ENCODE measurements at regions of chr5 and their contacts with region 1.

Region 1: DNA sequence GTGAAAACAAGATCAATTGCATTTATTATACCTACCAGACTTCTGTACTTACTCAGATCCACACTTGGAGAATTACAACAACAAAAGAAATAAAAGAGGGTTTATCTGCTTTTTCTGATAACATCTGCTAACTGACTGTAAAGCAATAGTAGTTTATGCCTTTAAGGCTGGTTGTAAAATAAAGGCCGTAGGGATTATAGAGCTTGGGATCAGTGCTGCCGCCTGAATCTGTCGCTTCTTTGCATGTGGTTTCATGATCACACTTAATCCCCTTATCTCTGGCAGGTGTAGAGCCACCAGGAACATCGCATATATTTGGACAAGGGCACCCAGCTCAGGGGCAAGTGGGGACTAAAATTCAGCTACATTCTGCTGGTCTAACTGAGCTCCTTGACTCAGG is 146.7 kb downstream of the CCDC192 start:
- DNase-seq: peak; percentile 84 to 88
- H3K4me3 ChIP-seq: no peak overlapping the region
- H3K4me3 Mint-ChIP-seq: no peak overlapping the region
- H3K27ac Mint-ChIP-seq: peak overlapping the region; percentile 57
- H3K4me1 ChIP-seq: peaks cover 26% of the 10 kb centered on the region
- H3K4me1 Mint-ChIP-seq: peaks cover 21% of the 10 kb centered on the region
- H3K27me3 ChIP-seq: no peaks in the 10 kb centered on the region
- H3K27me3 Mint-ChIP-seq: no peaks in the 10 kb centered on the region
- CTCF ChIP-seq: no peak

Region 2: GRCh38 chr5:127820910-127821553 is 28.9 kb before region 1 on chr5:
- CTCF ChIA-PET with region 1: no interaction called
- POLR2A ChIA-PET with region 1: no interaction called
- intact Hi-C with region 1: loop called (anchors 1 kb)
- DNase-seq: peak; percentile 51 to 59
- H3K4me3 ChIP-seq: no peak overlapping the region
- H3K4me3 Mint-ChIP-seq: no peak overlapping the region
- H3K27ac Mint-ChIP-seq: peak overlapping the region; percentile 15
- H3K4me1 ChIP-seq: peaks cover 30% of the 10 kb centered on the region
- H3K4me1 Mint-ChIP-seq: peaks cover 26% of the 10 kb centered on the region
- H3K27me3 ChIP-seq: no peaks in the 10 kb centered on the region
- H3K27me3 Mint-ChIP-seq: no peaks in the 10 kb centered on the region
- CTCF ChIP-seq: no peak

Region 3: DNA sequence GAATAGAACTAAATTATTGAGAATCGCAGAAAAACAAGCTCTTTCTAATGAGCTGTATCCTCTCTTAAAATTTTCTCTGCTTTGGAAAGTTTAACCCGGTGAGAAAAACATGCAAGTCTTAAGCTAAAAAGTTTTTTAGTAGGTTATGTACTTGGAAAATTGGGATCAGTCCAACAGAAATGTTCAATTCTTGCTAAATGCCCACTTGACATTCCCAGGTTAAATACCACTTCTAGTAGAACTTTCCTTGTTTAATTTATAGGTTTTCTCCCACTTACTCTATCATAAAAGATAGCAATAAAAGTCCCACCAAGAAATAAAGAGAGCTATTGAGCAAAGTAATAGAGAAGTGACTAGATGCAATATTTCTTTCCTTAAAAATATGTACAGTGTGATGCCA is 10.4 kb after region 1 on chr5:
- CTCF ChIA-PET with region 1: interaction called, 4 read pairs
- POLR2A ChIA-PET with region 1: no interaction called
- intact Hi-C with region 1: loop called (anchors 1 kb)
- DNase-seq: no peak
- H3K4me3 ChIP-seq: no peak overlapping the region
- H3K4me3 Mint-ChIP-seq: no peak overlapping the region
- H3K27ac Mint-ChIP-seq: no peak overlapping the region
- H3K4me1 ChIP-seq: peaks cover 11% of the 10 kb centered on the region
- H3K4me1 Mint-ChIP-seq: peaks cover 13% of the 10 kb centered on the region
- H3K27me3 ChIP-seq: no peaks in the 10 kb centered on the region
- H3K27me3 Mint-ChIP-seq: no peaks in the 10 kb centered on the region
- CTCF ChIP-seq: no peak